IMR-90 (cell line): ENCODE measurements at regions of chr10 and their contacts with region 1.

Region 1: GRCh38 chr10:68973975-68974374 is 14.6 kb upstream of the KIFBP start:
- DNase-seq: no peak
- ATAC-seq: no peak
- H3K4me3 ChIP-seq: no peak overlapping the region
- H3K27ac ChIP-seq: no peak overlapping the region
- H3K4me1 ChIP-seq: no peaks in the 10 kb centered on the region
- H3K27me3 ChIP-seq: no peaks in the 10 kb centered on the region
- CTCF ChIP-seq: no peak
- POLR2A ChIP-seq: no peak
- RAD21 ChIP-seq: no peak

Region 2: DNA sequence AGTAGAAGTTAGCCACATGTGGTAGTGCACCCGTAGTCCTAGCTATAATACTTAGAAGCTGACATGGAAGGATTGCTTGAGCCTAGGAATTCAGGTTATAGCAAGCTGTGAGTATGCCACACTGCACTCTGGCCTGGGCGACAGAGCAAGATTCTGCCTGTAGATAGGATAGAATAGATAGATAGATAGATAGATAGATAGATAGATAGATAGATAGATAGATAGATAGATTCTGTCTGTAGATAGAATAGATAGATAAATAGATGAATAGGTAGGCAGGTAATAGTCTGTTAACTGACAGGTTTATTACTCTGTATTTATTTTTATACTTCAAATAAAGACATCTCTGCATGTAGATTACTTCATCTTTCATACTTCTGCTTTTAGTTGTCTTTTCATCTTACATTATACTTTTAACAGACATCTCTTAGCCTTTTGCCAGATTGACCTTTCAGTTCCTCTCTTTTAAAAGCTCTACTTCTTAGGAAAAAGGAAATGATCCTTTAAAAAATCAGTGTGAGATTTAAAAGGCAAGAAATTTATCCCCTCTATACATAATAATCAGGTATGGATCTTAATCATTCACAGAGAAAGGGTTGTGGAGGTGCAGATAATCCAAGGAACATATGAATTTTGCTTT is 221.1 kb before region 1 on chr10:
- CTCF ChIA-PET with region 1: no interaction called
- POLR2A ChIA-PET with region 1: no interaction called
- dilution Hi-C with region 1: no loop called
- in situ Hi-C with region 1: no loop called
- intact Hi-C with region 1: loop called (anchors 10 kb)
- DNase-seq: no peak
- ATAC-seq: no peak
- H3K4me3 ChIP-seq: no peak overlapping the region
- H3K27ac ChIP-seq: no peak overlapping the region
- H3K4me1 ChIP-seq: no peaks in the 10 kb centered on the region
- H3K27me3 ChIP-seq: no peaks in the 10 kb centered on the region
- CTCF ChIP-seq: no peak
- POLR2A ChIP-seq: no peak
- RAD21 ChIP-seq: no peak